Psoas muscle (tissue), 8 donors: ENCODE measurements at regions of chr11 and their contacts with region 1.

Region 1: DNA sequence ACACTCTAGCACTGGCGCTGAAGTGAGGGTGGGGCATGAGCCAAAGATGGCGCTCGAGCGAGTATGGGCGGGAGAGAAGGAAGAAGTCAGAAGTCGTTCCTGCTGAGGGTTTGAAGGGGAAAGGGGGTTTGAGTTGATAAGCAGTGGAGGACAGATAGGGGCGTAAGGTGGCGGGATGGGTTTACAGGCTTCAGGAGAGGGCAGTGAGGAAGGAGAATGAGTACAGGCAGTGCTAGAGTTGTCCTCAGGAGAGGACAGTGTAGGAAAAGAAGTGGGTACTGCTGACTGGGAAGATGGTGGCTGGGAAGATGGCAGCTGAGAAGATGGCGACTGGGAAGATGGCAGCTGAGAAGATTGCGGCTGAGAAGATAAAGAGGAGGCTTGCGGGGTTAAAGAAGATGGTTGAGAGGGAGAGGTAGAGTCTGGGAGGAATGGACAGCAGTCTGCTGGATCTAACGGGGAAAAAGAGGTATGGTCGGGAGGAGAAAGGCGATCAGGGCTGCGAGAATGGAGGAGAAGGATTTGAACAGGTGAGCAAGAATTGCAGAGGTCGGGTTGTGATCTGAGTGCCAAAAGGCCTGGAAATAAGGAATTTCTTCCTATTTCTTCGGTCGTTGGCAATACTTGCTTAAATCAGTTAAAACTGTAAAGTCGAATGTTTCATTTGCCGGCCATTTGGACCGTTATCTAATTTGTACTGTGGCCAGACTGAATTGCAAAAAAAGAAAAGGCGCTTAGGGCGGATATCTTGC is 5.2 kb downstream of the PPFIBP2 start:
- DNase-seq: no peak
- ATAC-seq: no peak
- H3K4me3 ChIP-seq: no peak overlapping the region
- H3K27ac ChIP-seq: no peak overlapping the region
- H3K4me1 ChIP-seq: peaks cover 36% of the 10 kb centered on the region
- H3K27me3 ChIP-seq: no peaks in the 10 kb centered on the region
- CTCF ChIP-seq: no peak

Region 2: DNA sequence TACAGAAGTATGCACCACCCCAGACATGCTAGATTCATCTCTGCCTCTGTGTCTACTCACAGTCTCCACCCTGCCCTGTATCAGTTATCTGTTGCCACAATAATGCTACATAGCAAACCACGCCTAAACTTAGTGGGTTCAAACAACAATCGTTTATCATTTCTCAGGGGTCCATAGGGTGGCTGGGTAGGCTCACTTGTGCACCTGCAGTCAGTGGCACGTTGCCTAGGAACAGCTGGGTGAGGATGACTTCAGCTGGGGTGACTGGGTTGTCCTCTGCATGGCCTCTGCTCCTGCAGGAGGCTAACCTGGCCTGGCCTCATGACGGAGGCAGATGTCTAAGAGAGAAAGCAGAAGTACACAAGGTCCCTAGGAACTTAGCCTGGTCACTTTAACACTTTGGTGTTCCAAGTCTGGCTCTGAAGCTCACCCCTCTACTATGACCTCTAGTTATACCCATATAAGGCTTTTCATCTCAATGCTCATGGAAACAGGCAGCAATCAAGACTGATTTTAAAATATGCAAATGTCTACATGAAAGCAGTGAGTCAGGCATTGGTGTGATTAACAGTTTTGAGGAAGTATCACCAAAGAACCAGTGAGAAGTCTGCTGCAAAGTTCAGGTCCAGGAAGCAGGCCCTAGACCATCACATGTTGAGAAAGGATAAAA is 23.0 kb before region 1 on chr11:
- intact Hi-C with region 1: no loop called
- DNase-seq: no peak
- ATAC-seq: peak in 2 of 4 donors; percentile 37 to 42
- H3K4me3 ChIP-seq: no peak overlapping the region
- H3K27ac ChIP-seq: no peak overlapping the region
- H3K4me1 ChIP-seq: no peaks in the 10 kb centered on the region
- H3K27me3 ChIP-seq: no peaks in the 10 kb centered on the region
- CTCF ChIP-seq: no peak

Region 3: DNA sequence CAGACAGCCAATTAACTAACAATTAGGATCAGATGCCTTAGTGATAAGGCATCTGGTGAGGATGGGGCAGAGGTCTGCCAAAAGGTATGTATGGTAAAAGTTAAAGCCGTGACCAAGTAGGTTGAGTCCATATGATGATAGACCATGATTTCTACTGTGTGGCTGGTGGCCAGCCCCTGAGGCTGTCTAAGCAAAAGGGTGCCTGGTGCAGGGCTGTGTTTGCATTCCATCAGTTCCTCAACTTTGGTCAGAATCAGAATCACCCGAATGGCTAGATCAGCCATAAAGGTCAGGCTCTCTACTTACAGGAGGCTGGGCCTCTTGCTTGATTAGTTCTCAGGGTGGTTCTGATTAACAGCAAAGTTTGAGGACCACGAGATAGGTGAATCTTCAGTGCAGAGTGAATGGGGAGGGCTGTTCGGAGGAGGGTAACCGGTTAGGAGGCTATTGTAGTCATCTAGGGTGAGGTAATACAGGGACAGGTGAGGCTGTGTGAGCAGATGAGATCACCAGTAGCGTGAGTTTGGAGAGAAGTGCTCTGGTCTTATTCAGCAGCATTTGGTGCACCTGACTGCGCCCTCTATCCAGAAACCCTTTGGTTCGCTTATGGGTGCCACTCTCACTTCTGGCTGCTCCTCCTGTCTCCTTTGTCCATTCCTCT is 22.0 kb after region 1 on chr11:
- intact Hi-C with region 1: loop called in 1 of 2 experiments (anchors 2 kb)
- DNase-seq: no peak
- ATAC-seq: no peak
- H3K4me3 ChIP-seq: no peak overlapping the region
- H3K27ac ChIP-seq: no peak overlapping the region
- H3K4me1 ChIP-seq: peaks cover 44% of the 10 kb centered on the region
- H3K27me3 ChIP-seq: no peaks in the 10 kb centered on the region
- CTCF ChIP-seq: no peak

Region 4: DNA sequence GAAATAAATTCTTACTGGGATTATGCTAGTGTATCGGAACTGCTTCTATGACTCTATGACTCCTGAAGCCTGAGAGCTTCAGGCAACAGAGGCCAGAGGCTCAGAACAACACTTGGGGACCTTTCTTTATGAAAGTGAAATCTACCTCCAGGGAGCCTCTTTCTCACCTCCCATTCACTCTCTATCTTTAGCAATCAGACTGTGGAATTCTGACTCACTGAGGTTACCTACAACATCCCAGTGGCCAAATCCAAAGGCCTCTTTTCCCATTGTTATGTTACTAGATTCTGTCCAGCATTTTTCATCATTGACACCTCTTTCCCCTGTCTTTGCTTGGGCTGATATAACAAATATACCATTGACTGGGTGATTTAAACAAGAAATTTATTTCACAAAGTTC is 168.4 kb after region 1 on chr11:
- intact Hi-C with region 1: no loop called
- DNase-seq: no peak
- ATAC-seq: no peak
- H3K4me3 ChIP-seq: no peak overlapping the region
- H3K27ac ChIP-seq: no peak overlapping the region
- H3K4me1 ChIP-seq: peaks cover 5% of the 10 kb centered on the region
- H3K27me3 ChIP-seq: no peaks in the 10 kb centered on the region
- CTCF ChIP-seq: no peak